Transverse colon (tissue), 4 donors: ENCODE measurements at regions of chr9 and their contacts with region 1.

Region 1: GRCh38 chr9:85377731-85378289 is 363.9 kb downstream of the AGTPBP1 start:
- DNase-seq: no peak
- H3K4me3 ChIP-seq: no peak overlapping the region
- H3K27ac ChIP-seq: no peak overlapping the region
- H3K4me1 ChIP-seq: no peaks in the 10 kb centered on the region
- H3K27me3 ChIP-seq: no peaks in the 10 kb centered on the region
- CTCF ChIP-seq: no peak
- EP300 ChIP-seq: no peak
- POLR2A ChIP-seq: no peak

Region 2: DNA sequence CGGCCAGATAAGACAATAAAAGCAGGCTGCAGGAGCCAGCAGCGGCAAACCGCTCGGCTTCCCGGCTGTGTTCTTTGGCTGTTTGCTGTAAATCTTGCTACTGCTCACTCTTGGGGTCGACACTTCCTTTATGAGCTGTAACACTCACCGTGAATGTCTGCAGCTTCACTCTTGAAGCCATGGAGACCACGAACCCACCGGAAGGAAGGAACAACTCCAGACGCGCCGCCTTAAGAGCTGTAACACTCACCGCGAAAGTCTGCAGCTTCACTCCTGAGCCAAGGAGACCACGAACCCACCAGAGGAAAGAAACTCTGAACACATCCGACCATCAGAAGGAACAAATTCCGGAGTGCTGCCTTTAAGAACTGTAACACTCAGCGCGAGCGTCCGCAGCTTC is 87.8 kb before region 1 on chr9:
- in situ Hi-C with region 1: loop called in 1 of 4 experiments (anchors 25 kb)
- intact Hi-C with region 1: no loop called
- DNase-seq: no peak
- H3K4me3 ChIP-seq: no peak overlapping the region
- H3K27ac ChIP-seq: no peak overlapping the region
- H3K4me1 ChIP-seq: no peaks in the 10 kb centered on the region
- H3K27me3 ChIP-seq: no peaks in the 10 kb centered on the region
- CTCF ChIP-seq: no peak
- EP300 ChIP-seq: no peak
- POLR2A ChIP-seq: no peak